ENCODE measurements at regions of chr5 and their contacts with region 1.

Region 1: GRCh38 chr5:133240425-133241091 is 188.7 kb downstream of the HSPA4 start:
- DNase-seq: peak; percentile 95
- H3K4me3 ChIP-seq: no peak overlapping the region
- H3K27ac ChIP-seq: peak overlapping the region; percentile 77
- H3K4me1 ChIP-seq: peaks cover 27% of the 10 kb centered on the region
- H3K27me3 ChIP-seq: no peaks in the 10 kb centered on the region
- CTCF ChIP-seq: no peak
- POLR2A ChIP-seq: peak; percentile 49

Region 2: GRCh38 chr5:133179405-133179804 is 61.2 kb before region 1 on chr5:
- CTCF ChIA-PET with region 1: no interaction called
- POLR2A ChIA-PET with region 1: no interaction called
- dilution Hi-C with region 1: no loop called
- intact Hi-C with region 1: no loop called
- DNase-seq: no peak
- H3K4me3 ChIP-seq: no peak overlapping the region
- H3K27ac ChIP-seq: no peak overlapping the region
- H3K4me1 ChIP-seq: no peaks in the 10 kb centered on the region
- H3K27me3 ChIP-seq: no peaks in the 10 kb centered on the region
- CTCF ChIP-seq: no peak
- POLR2A ChIP-seq: no peak

Region 3: GRCh38 chr5:133225671-133226152 is 14.8 kb before region 1 on chr5:
- CTCF ChIA-PET with region 1: interaction called, 12 read pairs
- POLR2A ChIA-PET with region 1: no interaction called
- dilution Hi-C with region 1: no loop called
- intact Hi-C with region 1: loop called (anchors 2 kb)
- DNase-seq: peak; percentile 28
- H3K4me3 ChIP-seq: no peak overlapping the region
- H3K27ac ChIP-seq: no peak overlapping the region
- H3K4me1 ChIP-seq: peaks cover 7% of the 10 kb centered on the region
- H3K27me3 ChIP-seq: no peaks in the 10 kb centered on the region
- CTCF ChIP-seq: no peak
- POLR2A ChIP-seq: no peak

Region 4: GRCh38 chr5:135106610-135107471 is 1866.3 kb after region 1 on chr5:
- CTCF ChIA-PET with region 1: no interaction called
- POLR2A ChIA-PET with region 1: no interaction called
- dilution Hi-C with region 1: no loop called
- intact Hi-C with region 1: no loop called
- DNase-seq: no peak
- H3K4me3 ChIP-seq: no peak overlapping the region
- H3K27ac ChIP-seq: no peak overlapping the region
- H3K4me1 ChIP-seq: no peaks in the 10 kb centered on the region
- H3K27me3 ChIP-seq: peaks cover 0 to 4% of the 10 kb centered on the region in 2 experiments
- CTCF ChIP-seq: no peak
- POLR2A ChIP-seq: no peak

Measured in endothelial cell of umbilical vein (primary cell).